ENCODE measurements at regions of chr7 and their contacts with region 1.

Region 1: GRCh38 chr7:23315366-23315765 is 16.2 kb downstream of the MALSU1 start:
- DNase-seq: no peak
- ATAC-seq: no peak
- H3K4me3 ChIP-seq: no peak overlapping the region
- H3K4me3 Mint-ChIP-seq: no peak overlapping the region
- H3K27ac ChIP-seq: no peak overlapping the region
- H3K27ac Mint-ChIP-seq: no peak overlapping the region
- H3K4me1 ChIP-seq: no peaks in the 10 kb centered on the region
- H3K4me1 Mint-ChIP-seq: peaks cover 0 to 8% (median 3%) of the 10 kb centered on the region in 3 donors
- H3K27me3 ChIP-seq: peaks cover 0 to 4% of the 10 kb centered on the region in 2 experiments
- H3K27me3 Mint-ChIP-seq: peaks cover 0 to 8% of the 10 kb centered on the region in 2 donors

Region 2: GRCh38 chr7:22179442-22179879 is 1135.9 kb before region 1 on chr7:
- CTCF ChIA-PET with region 1: no interaction called
- POLR2A ChIA-PET with region 1: interaction called in 1 of 2 experiments, 11 read pairs
- DNase-seq: peak in 4 of 35 experiments; percentile 2 to 4 (median 3)
- ATAC-seq: no peak
- H3K4me3 ChIP-seq: no peak overlapping the region
- H3K4me3 Mint-ChIP-seq: no peak overlapping the region
- H3K27ac ChIP-seq: no peak overlapping the region
- H3K27ac Mint-ChIP-seq: no peak overlapping the region
- H3K4me1 ChIP-seq: peaks cover 0 to 1% of the 10 kb centered on the region in 2 experiments
- H3K4me1 Mint-ChIP-seq: peaks cover 0 to under 1% (median under 1%) of the 10 kb centered on the region in 3 donors
- H3K27me3 ChIP-seq: no peaks in the 10 kb centered on the region
- H3K27me3 Mint-ChIP-seq: peaks cover 6 to 26% of the 10 kb centered on the region in 2 donors

Region 3: GRCh38 chr7:23285657-23286646 is 29.4 kb before region 1 on chr7:
- CTCF ChIA-PET with region 1: no interaction called
- POLR2A ChIA-PET with region 1: no interaction called
- DNase-seq: no peak
- ATAC-seq: no peak
- H3K4me3 ChIP-seq: no peak overlapping the region
- H3K4me3 Mint-ChIP-seq: no peak overlapping the region
- H3K27ac ChIP-seq: no peak overlapping the region
- H3K27ac Mint-ChIP-seq: no peak overlapping the region
- H3K4me1 ChIP-seq: peaks cover 0 to 15% of the 10 kb centered on the region in 2 experiments
- H3K4me1 Mint-ChIP-seq: peaks cover 10 to 19% (median 17%) of the 10 kb centered on the region in 3 donors
- H3K27me3 ChIP-seq: no peaks in the 10 kb centered on the region
- H3K27me3 Mint-ChIP-seq: no peaks in the 10 kb centered on the region

Region 4: GRCh38 chr7:23343806-23344500 is 28.6 kb after region 1 on chr7:
- CTCF ChIA-PET with region 1: no interaction called
- POLR2A ChIA-PET with region 1: interaction called in 1 of 2 experiments, 11 read pairs
- DNase-seq: no peak
- ATAC-seq: no peak
- H3K4me3 ChIP-seq: no peak overlapping the region
- H3K4me3 Mint-ChIP-seq: no peak overlapping the region
- H3K27ac ChIP-seq: no peak overlapping the region
- H3K27ac Mint-ChIP-seq: no peak overlapping the region
- H3K4me1 ChIP-seq: peaks cover 6 to 8% of the 10 kb centered on the region in 2 experiments
- H3K4me1 Mint-ChIP-seq: peaks cover 26 to 30% (median 27%) of the 10 kb centered on the region in 3 donors
- H3K27me3 ChIP-seq: no peaks in the 10 kb centered on the region
- H3K27me3 Mint-ChIP-seq: peaks cover 0 to 6% of the 10 kb centered on the region in 2 donors

Measured in T-cell (primary cell).